Vagina (tissue), 2 donors: ENCODE measurements at regions of chr19 and their contacts with region 1.

Region 1: GRCh38 chr19:2747349-2747748 is 7.5 kb upstream of the SLC39A3 start:
- DNase-seq: no peak
- H3K4me3 ChIP-seq: no peak overlapping the region
- H3K27ac ChIP-seq: no peak overlapping the region
- H3K4me1 ChIP-seq: no peaks in the 10 kb centered on the region
- H3K27me3 ChIP-seq: no peaks in the 10 kb centered on the region
- CTCF ChIP-seq: no peak
- POLR2A ChIP-seq: no peak

Region 2: DNA sequence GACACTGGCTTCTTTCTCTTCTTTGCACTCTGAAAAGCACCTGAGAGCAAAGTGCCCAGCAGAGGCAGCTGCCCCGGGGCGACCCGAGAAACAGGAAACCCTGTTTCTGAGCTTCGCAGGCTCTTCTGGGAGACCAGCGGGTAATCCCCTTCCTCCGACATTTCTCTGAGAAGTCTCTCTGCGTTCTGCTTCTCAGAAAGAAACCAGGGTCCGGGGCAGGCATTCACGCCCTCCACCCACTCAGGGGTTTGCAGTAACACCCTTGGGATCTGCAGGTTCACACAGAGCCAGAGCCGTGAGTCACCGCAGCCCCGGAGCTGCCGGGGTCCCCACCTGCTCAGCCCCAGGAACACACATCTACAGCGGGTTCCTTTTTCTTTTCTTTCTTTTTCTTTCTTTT is 185.5 kb before region 1 on chr19:
- intact Hi-C with region 1: no loop called
- DNase-seq: no peak
- H3K4me3 ChIP-seq: no peak overlapping the region
- H3K27ac ChIP-seq: no peak overlapping the region
- H3K4me1 ChIP-seq: no peaks in the 10 kb centered on the region
- H3K27me3 ChIP-seq: no peaks in the 10 kb centered on the region
- CTCF ChIP-seq: no peak
- POLR2A ChIP-seq: no peak

Region 3: GRCh38 chr19:2653710-2654707 is 93.3 kb before region 1 on chr19:
- intact Hi-C with region 1: loop called (anchors 5 kb)
- DNase-seq: no peak
- H3K4me3 ChIP-seq: no peak overlapping the region
- H3K27ac ChIP-seq: no peak overlapping the region
- H3K4me1 ChIP-seq: no peaks in the 10 kb centered on the region
- H3K27me3 ChIP-seq: no peaks in the 10 kb centered on the region
- CTCF ChIP-seq: no peak
- POLR2A ChIP-seq: no peak

Region 4: GRCh38 chr19:2848616-2849015 is 101.3 kb after region 1 on chr19:
- intact Hi-C with region 1: no loop called
- DNase-seq: no peak
- H3K4me3 ChIP-seq: no peak overlapping the region
- H3K27ac ChIP-seq: no peak overlapping the region
- H3K4me1 ChIP-seq: no peaks in the 10 kb centered on the region
- H3K27me3 ChIP-seq: no peaks in the 10 kb centered on the region
- CTCF ChIP-seq: no peak
- POLR2A ChIP-seq: no peak